ENCODE measurements at regions of chr2 and their contacts with region 1.

Region 1: DNA sequence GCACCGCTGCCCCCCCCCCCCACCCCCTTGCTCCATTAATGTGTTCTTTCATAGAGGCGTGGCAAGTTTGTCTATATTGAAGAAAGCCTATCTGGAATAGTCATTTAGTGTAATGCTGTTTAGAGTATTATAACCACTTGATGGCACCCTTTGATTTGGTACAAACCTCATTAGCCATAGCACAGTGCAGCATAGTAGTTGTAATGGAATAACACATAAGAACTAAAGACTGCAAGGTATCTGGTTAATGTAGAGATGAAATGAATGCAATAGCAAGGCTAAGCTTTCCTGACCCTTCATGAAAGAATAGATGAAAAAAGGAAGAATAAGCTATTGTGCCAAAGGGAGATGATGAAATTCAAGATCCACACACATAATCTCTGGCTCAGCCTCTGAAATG is 81.9 kb downstream of the EHBP1 start:
- DNase-seq: peak in 2 of 4 experiments; percentile 14 to 24
- ATAC-seq: peak; percentile 87
- H3K4me3 ChIP-seq: no peak overlapping the region
- H3K27ac ChIP-seq: no peak overlapping the region
- H3K4me1 ChIP-seq: no peaks in the 10 kb centered on the region
- H3K27me3 ChIP-seq: no peaks in the 10 kb centered on the region
- CTCF ChIP-seq: peak in 2 of 3 experiments; percentile 41 to 64; a peak in 4 of 6 replicates
- EP300 ChIP-seq: no peak
- POLR2A ChIP-seq: no peak
- RAD21 ChIP-seq: peak; percentile 69 to 78

Region 2: DNA sequence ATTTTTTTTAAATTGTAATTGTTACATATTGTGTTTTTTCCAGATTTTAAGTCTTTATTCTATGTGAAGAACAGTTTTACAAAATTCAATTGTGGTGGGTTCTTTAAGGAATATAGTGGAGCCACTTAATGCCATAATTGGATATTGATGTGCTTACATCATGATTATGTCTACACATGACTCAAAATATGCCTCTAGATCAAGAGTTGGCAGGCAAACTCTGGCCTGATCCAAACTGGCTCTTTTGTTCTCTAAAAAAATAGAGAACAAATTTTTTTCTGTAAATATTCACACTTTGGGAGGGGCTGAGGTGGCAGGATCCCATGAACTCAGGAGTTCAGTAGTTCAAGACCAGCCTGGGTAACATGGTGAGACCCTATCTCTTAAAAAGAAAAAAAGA is 73.5 kb before region 1 on chr2:
- CTCF ChIA-PET with region 1: no interaction called
- POLR2A ChIA-PET with region 1: no interaction called
- in situ Hi-C with region 1: no loop called
- intact Hi-C with region 1: no loop called
- DNase-seq: no peak
- ATAC-seq: no peak
- H3K4me3 ChIP-seq: no peak overlapping the region
- H3K27ac ChIP-seq: no peak overlapping the region
- H3K4me1 ChIP-seq: peaks cover 0 to 4% of the 10 kb centered on the region in 2 experiments; a peak in 1 of 5 replicates
- H3K27me3 ChIP-seq: no peaks in the 10 kb centered on the region
- CTCF ChIP-seq: no peak
- EP300 ChIP-seq: no peak
- POLR2A ChIP-seq: no peak
- RAD21 ChIP-seq: no peak

Region 3: GRCh38 chr2:62814123-62814522 is 26.7 kb after region 1 on chr2:
- CTCF ChIA-PET with region 1: no interaction called
- POLR2A ChIA-PET with region 1: no interaction called
- in situ Hi-C with region 1: no loop called
- intact Hi-C with region 1: no loop called
- DNase-seq: peak in 2 of 4 experiments; percentile 12 to 60
- ATAC-seq: peak; percentile 61
- H3K4me3 ChIP-seq: no peak overlapping the region
- H3K27ac ChIP-seq: no peak overlapping the region
- H3K4me1 ChIP-seq: no peaks in the 10 kb centered on the region
- H3K27me3 ChIP-seq: no peaks in the 10 kb centered on the region
- CTCF ChIP-seq: no peak
- EP300 ChIP-seq: no peak
- POLR2A ChIP-seq: no peak
- RAD21 ChIP-seq: no peak

Region 4: GRCh38 chr2:62939735-62940491 is 152.5 kb after region 1 on chr2:
- CTCF ChIA-PET with region 1: no interaction called
- POLR2A ChIA-PET with region 1: no interaction called
- in situ Hi-C with region 1: no loop called
- intact Hi-C with region 1: loop called (anchors 10 kb)
- DNase-seq: no peak
- ATAC-seq: no peak
- H3K4me3 ChIP-seq: no peak overlapping the region
- H3K27ac ChIP-seq: no peak overlapping the region
- H3K4me1 ChIP-seq: no peaks in the 10 kb centered on the region
- H3K27me3 ChIP-seq: no peaks in the 10 kb centered on the region
- CTCF ChIP-seq: no peak
- EP300 ChIP-seq: no peak
- POLR2A ChIP-seq: no peak
- RAD21 ChIP-seq: no peak

Region 5: GRCh38 chr2:63023444-63023843 is 236.1 kb after region 1 on chr2:
- CTCF ChIA-PET with region 1: no interaction called
- POLR2A ChIA-PET with region 1: interaction called, 3 read pairs
- in situ Hi-C with region 1: no loop called
- intact Hi-C with region 1: loop called (anchors 1 kb)
- DNase-seq: peak; percentile 23 to 47 (median 34)
- ATAC-seq: peak; percentile 80
- H3K4me3 ChIP-seq: no peak overlapping the region
- H3K27ac ChIP-seq: no peak overlapping the region
- H3K4me1 ChIP-seq: no peaks in the 10 kb centered on the region
- H3K27me3 ChIP-seq: no peaks in the 10 kb centered on the region
- CTCF ChIP-seq: peak; percentile 42 to 50 (median 47); a peak in 5 of 6 replicates
- EP300 ChIP-seq: no peak
- POLR2A ChIP-seq: no peak
- RAD21 ChIP-seq: peak; percentile 18 to 72; a peak in 2 of 4 replicates

Region 6: GRCh38 chr2:63189026-63189425 is 401.6 kb after region 1 on chr2:
- CTCF ChIA-PET with region 1: interaction called, 5 read pairs
- POLR2A ChIA-PET with region 1: no interaction called
- in situ Hi-C with region 1: loop called (anchors 10 kb)
- intact Hi-C with region 1: loop called (anchors 1 kb)
- DNase-seq: peak; percentile 20 to 65 (median 44)
- ATAC-seq: peak; percentile 98
- H3K4me3 ChIP-seq: no peak overlapping the region
- H3K27ac ChIP-seq: no peak overlapping the region
- H3K4me1 ChIP-seq: no peaks in the 10 kb centered on the region
- H3K27me3 ChIP-seq: peaks cover 0 to 4% of the 10 kb centered on the region in 2 experiments; a peak in 1 of 5 replicates
- CTCF ChIP-seq: peak; percentile 78 to 84 (median 81)
- EP300 ChIP-seq: no peak
- POLR2A ChIP-seq: no peak
- RAD21 ChIP-seq: peak; percentile 13 to 77; a peak in 2 of 4 replicates

Region 7: GRCh38 chr2:63424329-63425078 is 637.1 kb after region 1 on chr2:
- CTCF ChIA-PET with region 1: no interaction called
- POLR2A ChIA-PET with region 1: no interaction called
- in situ Hi-C with region 1: no loop called
- intact Hi-C with region 1: loop called (anchors 2 kb)
- DNase-seq: peak; percentile 52 to 67 (median 55)
- ATAC-seq: peak; percentile 94
- H3K4me3 ChIP-seq: no peak overlapping the region
- H3K27ac ChIP-seq: no peak overlapping the region
- H3K4me1 ChIP-seq: peaks cover 2 to 5% of the 10 kb centered on the region in 2 experiments; a peak in 1 of 5 replicates
- H3K27me3 ChIP-seq: no peaks in the 10 kb centered on the region
- CTCF ChIP-seq: peak; percentile 61 to 83 (median 80)
- EP300 ChIP-seq: no peak
- POLR2A ChIP-seq: no peak
- RAD21 ChIP-seq: peak; percentile 43 to 78

Region 8: GRCh38 chr2:63488118-63488713 is 700.8 kb after region 1 on chr2:
- CTCF ChIA-PET with region 1: interaction called, 4 read pairs
- POLR2A ChIA-PET with region 1: no interaction called
- in situ Hi-C with region 1: no loop called
- intact Hi-C with region 1: loop called (anchors 1 kb)
- DNase-seq: peak; percentile 8 to 35 (median 12)
- ATAC-seq: peak; percentile 52; the same call in 1 of the 3 replicates
- H3K4me3 ChIP-seq: no peak overlapping the region
- H3K27ac ChIP-seq: no peak overlapping the region
- H3K4me1 ChIP-seq: no peaks in the 10 kb centered on the region
- H3K27me3 ChIP-seq: no peaks in the 10 kb centered on the region
- CTCF ChIP-seq: peak; percentile 16 to 66 (median 46); a peak in 4 of 6 replicates
- EP300 ChIP-seq: no peak
- POLR2A ChIP-seq: no peak
- RAD21 ChIP-seq: peak; percentile 56 to 67